ENCODE measurements at regions of chr5 and their contacts with region 1.

Region 1: DNA sequence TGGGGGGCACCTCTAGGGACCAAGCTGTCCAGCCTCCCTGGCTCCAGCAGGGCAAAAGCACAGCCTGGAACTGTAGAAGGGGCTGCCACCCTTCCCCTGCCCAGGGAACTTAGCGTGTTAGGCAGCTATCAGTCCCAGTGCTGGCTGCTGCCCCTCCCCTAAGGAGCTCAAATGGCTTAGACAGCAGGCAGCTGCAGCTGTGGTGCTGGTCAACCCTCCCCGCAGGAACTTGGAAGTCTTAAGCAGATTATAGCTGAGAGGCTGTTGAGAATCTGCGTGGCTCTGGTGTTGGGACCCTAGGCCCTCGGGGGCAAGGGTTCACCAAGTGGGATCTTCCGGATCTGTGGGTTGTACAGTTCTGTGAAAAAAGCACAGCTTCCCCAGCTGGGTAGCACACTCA is 536.5 kb upstream of the CDH10 start:
- DNase-seq: no peak
- H3K4me3 ChIP-seq: no peak overlapping the region
- H3K27ac ChIP-seq: no peak overlapping the region
- H3K4me1 ChIP-seq: no peaks in the 10 kb centered on the region
- H3K27me3 ChIP-seq: no peaks in the 10 kb centered on the region
- CTCF ChIP-seq: no peak
- POLR2A ChIP-seq: no peak

Region 2: DNA sequence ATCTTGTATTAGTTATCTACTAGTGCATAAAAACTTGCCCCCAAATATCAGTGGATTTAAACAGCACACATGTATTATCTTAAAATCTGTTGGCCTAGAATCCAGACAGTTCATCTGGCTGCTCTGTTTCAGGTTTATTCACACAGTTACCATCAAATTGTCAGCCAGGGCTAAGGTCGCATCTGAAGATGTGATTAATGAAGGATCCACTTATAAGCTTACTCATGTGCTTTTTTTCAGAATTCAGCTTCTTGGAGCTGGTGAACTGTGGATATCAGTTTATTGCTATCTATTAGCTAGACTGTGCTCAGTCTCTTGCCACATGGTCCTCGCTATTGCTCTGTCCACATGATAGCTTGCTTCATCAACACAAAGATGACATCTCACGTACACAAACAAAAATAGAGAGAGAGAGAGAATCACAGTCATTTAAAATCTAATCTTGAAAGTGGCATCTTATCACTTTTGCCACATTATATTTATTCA is 1592.4 kb before region 1 on chr5:
- intact Hi-C with region 1: no loop called
- DNase-seq: no peak
- H3K4me3 ChIP-seq: no peak overlapping the region
- H3K27ac ChIP-seq: no peak overlapping the region
- H3K4me1 ChIP-seq: no peaks in the 10 kb centered on the region
- H3K27me3 ChIP-seq: no peaks in the 10 kb centered on the region
- CTCF ChIP-seq: no peak
- POLR2A ChIP-seq: no peak

Region 3: DNA sequence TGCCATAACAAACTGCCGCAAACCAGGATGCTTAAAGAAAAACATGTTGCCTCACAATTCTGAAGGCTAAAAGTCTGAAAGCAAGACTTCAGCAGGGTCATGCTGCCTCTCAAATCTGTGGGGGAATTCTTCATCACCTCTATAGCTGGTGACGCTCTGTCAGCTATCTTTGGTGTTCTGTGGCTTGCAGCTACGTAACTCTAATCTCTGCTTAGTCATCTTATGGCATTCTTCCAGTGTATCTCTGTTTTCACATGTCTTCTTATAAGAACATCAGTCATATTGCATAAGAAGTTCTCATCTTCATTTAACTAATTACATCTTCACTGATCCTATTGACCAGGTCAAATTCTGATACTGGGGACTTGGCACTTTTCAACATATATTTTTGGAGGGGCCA is 779.5 kb before region 1 on chr5:
- intact Hi-C with region 1: no loop called
- DNase-seq: no peak
- H3K4me3 ChIP-seq: no peak overlapping the region
- H3K27ac ChIP-seq: no peak overlapping the region
- H3K4me1 ChIP-seq: no peaks in the 10 kb centered on the region
- H3K27me3 ChIP-seq: no peaks in the 10 kb centered on the region
- CTCF ChIP-seq: no peak
- POLR2A ChIP-seq: no peak

Region 4: GRCh38 chr5:25006737-25007302 is 174.4 kb before region 1 on chr5:
- intact Hi-C with region 1: loop called (anchors 5 kb)
- DNase-seq: no peak
- H3K4me3 ChIP-seq: no peak overlapping the region
- H3K27ac ChIP-seq: no peak overlapping the region
- H3K4me1 ChIP-seq: no peaks in the 10 kb centered on the region
- H3K27me3 ChIP-seq: no peaks in the 10 kb centered on the region
- CTCF ChIP-seq: no peak
- POLR2A ChIP-seq: no peak

Region 5: DNA sequence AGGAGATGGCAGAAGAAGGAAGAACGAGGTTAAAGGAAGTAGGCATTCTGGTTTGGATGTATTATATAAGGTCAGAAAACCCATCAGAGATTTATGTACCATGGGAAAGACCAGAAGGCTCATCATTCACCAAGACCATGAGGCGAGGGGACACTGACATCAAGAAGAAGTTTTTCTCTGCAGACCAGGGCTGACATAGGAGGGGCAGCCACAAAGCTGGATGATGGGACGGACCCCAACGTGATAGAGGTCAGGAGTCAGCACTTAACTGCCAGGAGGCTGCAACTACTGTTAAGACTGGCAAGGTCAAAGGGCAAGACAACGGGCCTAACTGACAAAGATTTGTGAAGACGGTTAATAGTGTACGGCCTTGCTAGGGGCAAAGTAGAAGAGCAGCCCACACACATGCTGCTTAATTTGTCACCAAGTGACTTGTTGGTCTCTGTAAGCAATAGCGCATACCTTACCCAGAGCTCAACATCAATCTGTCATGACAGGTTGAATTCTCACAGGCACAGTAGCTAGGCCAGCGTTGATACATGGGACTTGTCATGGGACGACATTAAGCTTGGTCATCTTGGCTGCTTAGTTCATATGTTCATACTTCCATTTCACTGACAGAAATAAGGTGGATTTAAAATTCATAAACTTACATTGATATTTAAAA is 43.2 kb after region 1 on chr5:
- intact Hi-C with region 1: no loop called
- DNase-seq: no peak
- H3K4me3 ChIP-seq: no peak overlapping the region
- H3K27ac ChIP-seq: no peak overlapping the region
- H3K4me1 ChIP-seq: no peaks in the 10 kb centered on the region
- H3K27me3 ChIP-seq: no peaks in the 10 kb centered on the region
- CTCF ChIP-seq: no peak
- POLR2A ChIP-seq: no peak

Measured in breast epithelium (tissue), 4 donors.